CD14-positive monocyte (primary cell): ENCODE measurements at regions of chr5 and their contacts with region 1.

Region 1: DNA sequence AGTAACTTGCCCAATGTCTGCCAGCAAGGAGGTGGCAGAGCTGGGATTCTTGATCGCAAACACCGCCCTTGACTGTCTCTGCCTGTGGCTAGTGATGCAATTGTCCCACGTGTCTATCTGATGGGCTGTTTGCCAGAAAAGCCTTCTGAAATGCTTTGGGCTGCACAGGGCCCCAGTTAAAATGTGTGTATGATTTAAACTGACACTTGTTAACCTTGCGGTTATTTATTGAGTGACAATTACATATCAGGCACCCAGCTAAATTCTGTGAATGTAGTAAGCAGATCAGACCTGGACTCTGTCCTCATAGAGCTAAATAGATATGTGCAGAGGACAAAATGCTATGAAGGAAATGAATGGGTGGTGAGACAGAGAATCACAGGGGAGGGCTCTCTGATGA is 11.6 kb upstream of the IL12B start:
- DNase-seq: peak; percentile 80 to 90 (median 90)
- H3K4me3 ChIP-seq: no peak overlapping the region
- H3K4me3 Mint-ChIP-seq: no peak overlapping the region
- H3K27ac ChIP-seq: peak overlapping the region; percentile 14 to 30
- H3K27ac Mint-ChIP-seq: peak overlapping the region; percentile 80 to 97 (median 89)
- H3K4me1 ChIP-seq: peaks cover 57 to 71% of the 10 kb centered on the region in 2 donors
- H3K4me1 Mint-ChIP-seq: peaks cover 65% of the 10 kb centered on the region
- H3K27me3 ChIP-seq: no peaks in the 10 kb centered on the region
- H3K27me3 Mint-ChIP-seq: peaks cover 0 to 7% (median 0%) of the 10 kb centered on the region in 3 donors
- CTCF ChIP-seq: no peak

Region 2: GRCh38 chr5:160008877-160009590 is 667.1 kb after region 1 on chr5 and contains the start of gene TTC1:
- intact Hi-C with region 1: loop called in 1 of 2 experiments (anchors 10 kb)
- DNase-seq: peak; percentile 99 to 100 (median 99)
- H3K4me3 ChIP-seq: peak within 1 kb of the TSS; percentile 92 to 100 (median 95)
- H3K4me3 Mint-ChIP-seq: peak within 1 kb of the TSS; percentile 95 to 98
- H3K27ac ChIP-seq: peak within 1 kb of the TSS; percentile 65 to 99
- H3K27ac Mint-ChIP-seq: peak within 1 kb of the TSS; percentile 99 to 100 (median 99)
- H3K4me1 ChIP-seq: peaks cover 15 to 19% of the 10 kb centered on the region in 2 donors
- H3K4me1 Mint-ChIP-seq: peaks cover 19% of the 10 kb centered on the region
- H3K27me3 ChIP-seq: no peaks in the 10 kb centered on the region
- H3K27me3 Mint-ChIP-seq: peaks cover 0 to 14% (median 7%) of the 10 kb centered on the region in 3 donors
- CTCF ChIP-seq: no peak
- polyA plus RNA-seq, gene TTC1: 11.4 to 63.4 (median 63.0) TPM